ENCODE measurements at regions of chr3 and their contacts with region 1.

Region 1: GRCh38 chr3:56997675-56998074 is 62.8 kb upstream of the SPATA12 start:
- DNase-seq: no peak
- H3K4me3 ChIP-seq: no peak overlapping the region
- H3K27ac ChIP-seq: no peak overlapping the region
- H3K4me1 ChIP-seq: peaks cover 17% of the 10 kb centered on the region
- CTCF ChIP-seq: no peak

Region 2: DNA sequence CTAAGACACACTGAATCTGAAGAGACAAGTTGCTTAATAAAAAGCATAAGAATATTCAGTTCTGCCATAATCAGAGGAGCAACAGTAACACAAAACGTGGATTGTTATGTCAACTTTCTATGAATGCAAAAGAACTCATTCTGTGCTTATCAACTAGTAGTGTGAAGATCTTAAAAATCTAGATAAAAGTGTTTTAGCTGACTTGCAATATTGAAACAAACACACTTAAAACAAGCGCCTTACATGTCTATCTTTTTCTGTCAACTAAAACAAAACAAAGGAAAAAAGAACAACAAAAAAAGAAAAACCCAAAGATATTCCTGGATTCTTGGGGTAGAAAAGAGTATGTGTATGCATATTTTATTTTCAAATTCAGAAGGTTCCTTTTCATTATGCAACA is 352.3 kb before region 1 on chr3:
- CTCF ChIA-PET with region 1: no interaction called
- POLR2A ChIA-PET with region 1: no interaction called
- intact Hi-C with region 1: no loop called
- DNase-seq: no peak
- H3K4me3 ChIP-seq: no peak overlapping the region
- H3K27ac ChIP-seq: no peak overlapping the region
- H3K4me1 ChIP-seq: no peaks in the 10 kb centered on the region
- CTCF ChIP-seq: no peak

Region 3: GRCh38 chr3:57093971-57094535 is 96.4 kb after region 1 on chr3:
- CTCF ChIA-PET with region 1: no interaction called
- POLR2A ChIA-PET with region 1: no interaction called
- intact Hi-C with region 1: loop called (anchors 1 kb)
- DNase-seq: no peak
- H3K4me3 ChIP-seq: no peak overlapping the region
- H3K27ac ChIP-seq: no peak overlapping the region
- H3K4me1 ChIP-seq: peaks cover 20% of the 10 kb centered on the region
- CTCF ChIP-seq: no peak

Region 4: GRCh38 chr3:57184526-57184925 is 186.9 kb after region 1 on chr3:
- CTCF ChIA-PET with region 1: no interaction called
- POLR2A ChIA-PET with region 1: no interaction called
- intact Hi-C with region 1: no loop called
- DNase-seq: no peak
- H3K4me3 ChIP-seq: peak overlapping the region; percentile 30
- H3K27ac ChIP-seq: no peak overlapping the region
- H3K4me1 ChIP-seq: peaks cover 30% of the 10 kb centered on the region
- CTCF ChIP-seq: no peak

Measured in OCI-LY7 (cell line).